Posterior cingulate gyrus (tissue), 11 donors: ENCODE measurements at regions of chr2 and their contacts with region 1.

Region 1: GRCh38 chr2:218269899-218270720 is at the starts of genes AAMP and PNKD:
- DNase-seq: peak; percentile 100

Region 2: DNA sequence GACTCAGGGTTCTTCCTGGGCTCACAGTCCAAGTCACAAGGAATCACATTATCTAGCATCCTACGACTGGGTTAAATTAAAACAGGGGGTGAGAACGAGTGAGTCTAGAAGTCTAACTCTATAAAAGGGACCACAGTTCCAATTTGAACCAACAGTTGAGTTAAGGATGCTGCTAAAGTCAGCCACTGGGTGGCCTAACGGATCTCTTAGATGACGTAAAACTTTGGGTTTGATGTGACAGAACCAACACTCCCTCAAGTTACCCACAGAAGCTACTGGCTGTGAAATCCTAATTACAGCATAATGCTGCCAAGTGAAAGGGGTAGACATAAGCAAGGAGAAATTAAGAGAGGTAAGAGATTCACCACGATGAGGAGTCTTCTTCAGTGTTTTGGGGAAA is 233.7 kb before region 1 on chr2:
- intact Hi-C with region 1: no loop called
- DNase-seq: no peak

Region 3: DNA sequence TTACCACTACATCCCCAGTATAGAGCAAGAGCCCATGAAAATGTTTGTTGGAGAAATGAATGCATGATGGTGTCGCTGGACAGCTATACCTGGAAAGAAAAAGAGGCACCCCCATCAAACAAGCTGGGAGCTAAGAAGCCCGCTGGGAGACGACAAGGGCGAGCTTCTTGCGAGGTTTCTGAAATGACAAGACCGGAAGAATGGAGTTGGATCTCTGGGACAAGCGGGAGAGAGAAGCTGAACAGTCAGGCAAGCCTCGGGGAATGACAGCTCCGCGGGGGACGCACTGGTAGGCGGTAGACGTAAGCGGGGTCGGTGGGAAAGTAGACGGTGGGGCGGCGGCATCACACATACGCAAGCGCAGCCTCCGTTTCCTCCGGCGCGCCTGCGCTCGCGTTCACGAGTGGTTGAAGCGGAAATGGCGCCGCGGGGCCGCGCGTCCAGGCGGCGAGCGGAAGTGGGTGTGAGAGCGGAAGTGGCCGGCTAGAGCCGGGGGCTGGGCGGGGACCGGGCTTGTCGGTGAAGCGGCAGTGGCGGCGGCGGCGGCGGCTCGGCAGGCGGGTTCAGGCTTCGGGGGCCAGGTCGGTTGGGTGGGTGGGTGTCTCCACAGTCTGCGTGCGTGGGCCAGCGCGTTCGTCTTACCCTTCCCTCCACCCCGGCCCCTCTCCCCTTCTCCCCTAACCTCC is 53.3 kb before region 1 on chr2 and contains the start of gene ARPC2:
- intact Hi-C with region 1: loop called (anchors 1 kb)
- DNase-seq: peak; percentile 87 to 99 (median 91)

Region 4: DNA sequence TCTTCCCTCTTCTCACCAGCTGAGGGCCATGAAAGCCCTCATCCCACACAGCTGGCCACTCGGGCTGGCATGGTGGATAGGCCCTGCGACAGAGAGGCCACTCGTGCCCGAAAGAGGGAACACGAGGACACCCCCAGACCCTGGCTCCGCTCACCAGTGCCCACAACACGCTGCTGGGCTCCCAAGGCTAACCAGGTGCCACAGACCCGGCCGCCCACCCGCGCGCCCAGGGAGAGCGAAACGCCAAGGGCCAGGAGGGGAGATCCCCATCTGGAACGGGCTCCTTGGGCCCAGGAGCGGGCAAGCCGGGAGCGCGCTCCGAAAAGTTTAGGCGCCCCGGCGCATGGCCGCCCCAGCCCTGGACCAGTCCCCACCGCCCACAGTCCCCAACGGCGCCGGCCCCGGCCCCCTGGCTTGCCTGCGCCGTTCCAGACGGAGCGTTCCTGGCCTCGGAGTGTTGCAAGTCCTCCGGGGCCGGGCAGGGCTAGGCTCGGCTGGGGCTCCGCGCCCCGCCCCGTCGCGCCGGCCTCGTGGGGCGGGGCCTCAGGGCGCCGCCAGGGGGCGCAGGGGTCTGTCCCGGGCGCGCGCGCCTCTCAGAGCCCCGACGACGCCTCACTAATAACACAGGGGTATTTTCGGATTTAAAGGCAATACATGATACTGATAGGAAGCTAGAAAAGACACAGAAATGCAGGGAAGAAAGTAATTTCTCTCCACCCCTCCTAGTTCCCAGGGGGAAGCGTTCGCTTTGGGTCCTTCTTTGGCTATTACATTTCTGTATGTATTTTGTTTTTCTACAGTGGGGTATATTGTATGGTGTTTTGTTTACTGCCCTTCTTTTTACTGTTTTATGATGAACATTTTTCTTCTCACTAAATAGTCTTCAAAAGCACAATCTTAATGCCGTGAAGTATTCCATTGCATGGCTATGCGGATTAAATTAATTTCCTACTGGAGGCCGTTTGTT is 22.2 kb after region 1 on chr2 and contains the start of gene TMBIM1:
- intact Hi-C with region 1: loop called (anchors 2 kb)
- DNase-seq: peak in 9 of 10 donors; percentile 43 to 95 (median 61)

Region 5: DNA sequence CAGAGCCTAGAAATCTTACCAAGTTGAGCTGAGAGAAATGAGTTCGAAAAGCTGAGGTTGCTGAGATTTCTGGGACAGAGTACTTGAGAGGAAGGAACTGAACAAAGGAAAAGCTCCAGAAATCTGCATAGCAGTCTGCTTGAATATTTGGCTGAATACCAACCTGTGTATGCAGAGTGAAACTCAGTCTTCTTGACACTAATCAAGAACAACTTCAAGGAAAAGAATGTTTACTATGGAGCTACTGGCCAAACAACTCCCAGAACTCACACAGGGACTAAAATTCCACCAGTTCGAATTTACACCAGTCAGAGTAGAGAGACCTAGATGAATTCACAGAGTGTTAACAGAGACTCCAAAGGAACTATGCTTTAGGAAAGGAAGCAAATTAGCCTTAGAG is 231.6 kb after region 1 on chr2:
- intact Hi-C with region 1: no loop called
- DNase-seq: no peak

Region 6: GRCh38 chr2:218568190-218569037 is 298.3 kb after region 1 on chr2 and contains the starts of genes CNOT9 and USP37:
- intact Hi-C with region 1: loop called (anchors 5 kb)
- DNase-seq: peak; percentile 99 to 100 (median 99)

Region 7: GRCh38 chr2:218680061-218680460 is 410.0 kb after region 1 on chr2:
- intact Hi-C with region 1: no loop called
- DNase-seq: no peak